ENCODE measurements at regions of chr2 and their contacts with region 1.

Region 1: DNA sequence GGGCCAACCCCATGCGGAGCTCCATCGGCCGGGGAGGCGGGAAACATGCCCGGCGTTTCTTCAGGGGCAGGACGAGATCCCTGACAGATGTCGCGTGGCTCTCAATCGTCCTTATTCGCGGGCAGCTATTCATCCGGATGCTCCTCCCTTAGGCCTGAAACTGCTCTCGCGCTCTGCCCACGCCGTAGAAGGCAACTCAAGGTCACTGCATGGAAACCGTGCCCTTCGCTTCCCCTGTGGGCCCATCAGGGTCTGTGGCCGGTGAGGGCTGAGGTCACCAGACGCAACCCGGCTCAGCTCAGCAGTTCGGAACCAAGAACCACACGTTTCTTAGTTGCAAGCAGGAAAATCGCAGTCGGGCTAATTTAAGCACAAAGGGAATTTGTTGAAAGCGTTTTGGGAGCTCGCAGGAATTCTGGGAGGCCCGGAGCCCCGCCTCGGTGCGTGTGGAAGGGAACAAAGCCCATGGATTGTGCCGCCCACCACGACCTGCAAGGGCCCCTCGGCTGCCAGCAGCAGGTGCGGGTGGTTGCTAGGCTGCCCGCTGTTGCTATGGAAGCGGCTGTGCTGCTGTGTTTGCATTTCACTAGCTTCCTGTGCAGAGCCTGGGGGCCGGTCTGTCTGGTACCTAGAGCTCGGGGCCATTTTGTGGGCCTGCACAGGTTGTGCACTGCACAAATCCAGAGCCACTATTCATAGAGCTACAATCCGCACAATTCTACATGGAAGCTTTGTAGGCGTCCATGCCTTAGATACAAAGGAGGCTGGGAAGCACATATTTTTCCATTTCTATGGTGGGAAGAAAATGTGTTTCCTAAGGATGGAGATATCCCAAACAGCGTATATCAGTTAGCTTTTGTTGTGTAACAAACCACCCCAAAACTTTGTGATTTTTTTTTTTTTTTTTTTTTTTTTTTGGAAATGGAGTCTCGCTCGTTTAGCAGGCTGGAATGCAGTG is 6.0 kb upstream of the ALLC start:
- DNase-seq: no peak
- H3K4me3 ChIP-seq: no peak overlapping the region
- H3K27ac ChIP-seq: no peak overlapping the region
- H3K4me1 ChIP-seq: no peaks in the 10 kb centered on the region
- H3K27me3 ChIP-seq: peaks cover 48% of the 10 kb centered on the region
- CTCF ChIP-seq: no peak

Region 2: DNA sequence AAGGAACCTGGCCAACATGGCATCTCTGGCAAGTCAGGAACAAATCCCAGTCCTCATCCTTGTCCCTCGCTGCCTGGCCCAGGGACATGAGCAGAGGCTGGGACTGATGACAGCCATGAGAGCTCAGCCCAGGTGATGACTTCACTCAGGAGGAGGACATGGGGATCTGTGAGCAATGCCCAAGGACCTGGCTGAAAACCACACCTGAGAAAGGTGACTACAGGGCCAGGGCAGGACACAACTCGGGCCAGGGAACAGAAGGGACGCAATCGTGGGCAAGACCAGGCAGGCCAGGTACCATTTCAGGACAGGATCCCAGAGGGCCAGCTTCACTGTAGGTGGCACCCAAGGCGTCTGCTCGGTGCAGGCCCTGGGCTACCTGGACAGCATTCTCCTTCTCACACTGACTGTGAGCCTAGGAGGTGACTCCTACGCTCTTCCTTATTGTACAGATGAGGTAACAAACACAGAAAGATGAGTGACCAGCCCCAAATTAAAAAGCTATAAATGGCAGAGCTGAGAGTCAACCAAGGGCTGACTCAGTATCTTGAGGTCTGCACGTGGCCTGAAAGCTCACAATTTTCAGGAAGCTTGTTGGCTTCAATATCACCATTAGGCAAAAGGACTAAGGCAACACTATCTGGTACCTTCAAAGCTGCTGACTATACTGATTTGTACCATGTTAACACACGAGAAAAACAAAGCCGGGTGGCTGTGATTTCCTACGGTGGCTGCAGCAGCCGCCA is 415.5 kb before region 1 on chr2:
- CTCF ChIA-PET with region 1: no interaction called
- POLR2A ChIA-PET with region 1: no interaction called
- intact Hi-C with region 1: loop called (anchors 2 kb)
- DNase-seq: no peak
- H3K4me3 ChIP-seq: no peak overlapping the region
- H3K27ac ChIP-seq: no peak overlapping the region
- H3K4me1 ChIP-seq: no peaks in the 10 kb centered on the region
- H3K27me3 ChIP-seq: no peaks in the 10 kb centered on the region
- CTCF ChIP-seq: no peak

Region 3: DNA sequence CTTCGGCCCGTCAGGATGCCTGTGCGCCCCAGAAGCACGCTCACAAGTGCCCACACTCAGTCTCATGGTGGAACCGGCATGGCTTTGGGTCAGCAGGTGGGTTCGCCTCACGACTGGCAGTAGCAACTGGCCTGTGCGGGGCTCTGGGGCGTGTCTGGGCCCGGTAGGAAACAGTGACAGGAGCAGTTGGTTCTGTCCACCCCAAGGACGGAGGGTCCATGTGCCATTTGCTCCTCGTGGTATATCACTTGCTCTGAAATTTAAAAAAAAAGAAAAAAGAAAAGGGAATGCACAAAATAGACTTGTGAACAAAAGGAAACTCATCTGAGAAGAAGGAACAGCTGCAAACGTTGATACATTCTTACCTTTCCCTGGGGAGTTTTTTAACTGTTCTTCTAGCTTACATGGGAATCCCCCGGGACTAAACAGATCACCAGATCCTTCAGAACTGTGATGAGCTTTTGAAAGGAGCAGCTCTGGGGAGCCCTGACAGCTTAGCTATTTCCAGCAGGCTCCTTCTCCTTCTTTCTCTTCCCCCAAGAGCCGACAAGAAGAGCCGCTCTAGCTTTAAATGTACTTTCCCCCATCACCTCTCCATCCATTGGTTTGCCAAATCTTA is 229.7 kb before region 1 on chr2:
- CTCF ChIA-PET with region 1: no interaction called
- POLR2A ChIA-PET with region 1: no interaction called
- intact Hi-C with region 1: loop called (anchors 1 kb)
- DNase-seq: no peak
- H3K4me3 ChIP-seq: no peak overlapping the region
- H3K27ac ChIP-seq: no peak overlapping the region
- H3K4me1 ChIP-seq: no peaks in the 10 kb centered on the region
- H3K27me3 ChIP-seq: no peaks in the 10 kb centered on the region
- CTCF ChIP-seq: no peak

Region 4: GRCh38 chr2:3480352-3481012 is 171.5 kb before region 1 on chr2:
- CTCF ChIA-PET with region 1: no interaction called
- POLR2A ChIA-PET with region 1: no interaction called
- intact Hi-C with region 1: loop called (anchors 1 kb)
- DNase-seq: no peak
- H3K4me3 ChIP-seq: no peak overlapping the region
- H3K27ac ChIP-seq: no peak overlapping the region
- H3K4me1 ChIP-seq: no peaks in the 10 kb centered on the region
- H3K27me3 ChIP-seq: no peaks in the 10 kb centered on the region
- CTCF ChIP-seq: no peak

Region 5: DNA sequence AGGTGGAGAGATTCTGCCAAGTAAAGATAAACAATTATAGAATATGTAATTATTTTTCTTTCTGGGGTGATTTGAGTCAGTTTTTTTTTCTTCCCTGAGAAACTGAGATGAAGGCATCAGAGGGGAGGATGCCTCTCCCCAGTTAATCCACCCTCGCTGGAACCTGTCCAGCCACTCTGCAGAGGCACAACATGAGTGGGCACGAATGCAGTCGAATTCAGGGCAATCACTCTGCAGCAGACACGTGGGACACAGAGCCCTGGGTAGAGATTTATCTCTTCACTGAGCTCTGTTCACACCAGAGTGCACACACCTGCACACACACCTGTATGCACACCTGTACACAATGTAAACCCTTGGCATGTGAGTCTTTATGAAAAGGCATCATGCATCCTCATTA is 205.6 kb after region 1 on chr2:
- CTCF ChIA-PET with region 1: no interaction called
- POLR2A ChIA-PET with region 1: no interaction called
- intact Hi-C with region 1: no loop called
- DNase-seq: no peak
- H3K4me3 ChIP-seq: no peak overlapping the region
- H3K27ac ChIP-seq: no peak overlapping the region
- H3K4me1 ChIP-seq: no peaks in the 10 kb centered on the region
- H3K27me3 ChIP-seq: no peaks in the 10 kb centered on the region
- CTCF ChIP-seq: no peak